Activated T-helper 1 cell treated with anti-CD3 and anti-CD28 coated beads, Interleukin-12 subunit alpha, Interleukin-12 subunit beta, Interleukin-2, Interleukin-4 antibody, amounts not matched to agents 30 ng/mL and 10 ng/mL and 1 ng/mL, durations not matched to agents 14 hours and 24 hours and 36 hours (primary cell): ENCODE measurements at regions of chr15 and their contacts with region 1.

Region 1: GRCh38 chr15:42608110-42608531 is 32.7 kb downstream of the STARD9 start:
- DNase-seq: peak; percentile 65
- H3K4me3 Mint-ChIP-seq: peak overlapping the region; percentile 32
- H3K27ac Mint-ChIP-seq: peak overlapping the region; percentile 67
- H3K4me1 Mint-ChIP-seq: peaks cover 45% of the 10 kb centered on the region
- H3K27me3 Mint-ChIP-seq: no peaks in the 10 kb centered on the region

Region 2: GRCh38 chr15:42495361-42496212 is 112.5 kb before region 1 on chr15 and contains the start of gene SNAP23:
- intact Hi-C with region 1: loop called (anchors 5 kb)
- DNase-seq: peak; percentile 84
- H3K4me3 Mint-ChIP-seq: peak within 1 kb of the TSS; percentile 100
- H3K27ac Mint-ChIP-seq: peak within 1 kb of the TSS; percentile 89
- H3K4me1 Mint-ChIP-seq: peaks cover 60% of the 10 kb centered on the region
- H3K27me3 Mint-ChIP-seq: no peaks in the 10 kb centered on the region
- total RNA-seq, gene SNAP23: 73.8 and 87.5 TPM in 2 replicates

Region 3: DNA sequence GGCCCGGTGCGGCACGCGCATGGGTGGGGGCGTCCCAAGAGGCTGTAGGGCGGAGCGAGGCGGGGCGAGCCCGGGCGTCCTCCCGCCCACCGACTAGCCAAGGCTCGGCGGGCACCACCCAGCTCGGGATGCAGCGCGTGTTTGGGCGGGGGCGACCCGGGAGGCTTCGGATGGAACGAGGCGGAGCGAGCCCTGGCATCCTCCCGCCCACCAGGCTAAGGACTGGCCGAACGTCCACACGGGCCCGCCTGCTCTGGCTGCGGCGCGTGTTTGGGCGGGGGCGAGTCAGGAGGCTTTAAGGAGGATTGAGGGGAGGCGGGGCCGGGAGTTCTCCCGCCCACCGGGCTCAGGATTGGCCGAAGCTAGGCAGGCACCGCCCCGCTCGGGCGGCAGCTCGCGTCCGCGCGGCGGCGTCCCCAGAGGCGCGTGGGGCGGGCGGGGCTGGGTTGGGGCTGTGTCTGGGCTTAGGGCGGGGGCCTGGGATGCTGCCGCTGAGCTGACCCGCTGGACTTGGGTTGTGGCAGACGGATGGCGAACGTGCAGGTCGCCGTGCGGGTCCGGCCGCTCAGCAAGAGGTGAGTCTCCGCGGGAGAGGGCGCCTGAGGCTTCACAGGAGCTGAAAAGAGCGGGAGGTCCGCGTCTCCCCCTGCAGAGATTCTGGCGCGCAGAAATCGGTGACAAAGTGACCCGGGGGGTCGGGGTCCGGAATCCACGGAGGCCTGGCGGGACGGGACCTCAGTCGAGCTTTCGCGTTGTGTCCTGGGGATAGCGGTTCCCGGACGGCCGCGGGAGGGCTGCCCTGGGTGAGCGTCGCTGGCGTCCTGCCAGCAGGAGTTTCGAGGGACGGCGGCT is 32.7 kb before region 1 on chr15 and contains the start of gene STARD9:
- intact Hi-C with region 1: loop called (anchors 1 kb)
- DNase-seq: peak; percentile 93
- H3K4me3 Mint-ChIP-seq: peak within 1 kb of the TSS; percentile 92
- H3K27ac Mint-ChIP-seq: peak within 1 kb of the TSS; percentile 72
- H3K4me1 Mint-ChIP-seq: peaks cover 35% of the 10 kb centered on the region
- H3K27me3 Mint-ChIP-seq: peaks cover 24% of the 10 kb centered on the region
- total RNA-seq, gene STARD9: 6.1 and 9.2 TPM in 2 replicates

Region 4: GRCh38 chr15:42749266-42749665 is 141.1 kb after region 1 on chr15:
- intact Hi-C with region 1: no loop called
- DNase-seq: no peak
- H3K4me3 Mint-ChIP-seq: no peak overlapping the region
- H3K27ac Mint-ChIP-seq: no peak overlapping the region
- H3K4me1 Mint-ChIP-seq: no peaks in the 10 kb centered on the region
- H3K27me3 Mint-ChIP-seq: no peaks in the 10 kb centered on the region